ENCODE measurements at regions of chr10 and their contacts with region 1.

Region 1: GRCh38 chr10:3785257-3785850 is 345 bp upstream of the KLF6 start:
- DNase-seq: peak; percentile 99
- H3K4me3 ChIP-seq: peak overlapping the region; percentile 73 to 97 (median 90)
- H3K27ac ChIP-seq: peak overlapping the region; percentile 98 to 100 (median 100)
- H3K4me1 ChIP-seq: peaks cover 0 to 20% (median 18%) of the 10 kb centered on the region in 4 donors
- H3K27me3 ChIP-seq: no peaks in the 10 kb centered on the region
- CTCF ChIP-seq: no peak
- EP300 ChIP-seq: peak in 2 of 4 donors; percentile 24 to 75
- POLR2A ChIP-seq: peak; percentile 72 to 88

Region 2: GRCh38 chr10:3467052-3467951 is 318.1 kb before region 1 on chr10:
- intact Hi-C with region 1: loop called (anchors 5 kb)
- DNase-seq: peak; percentile 88
- H3K4me3 ChIP-seq: peak overlapping the region in 2 of 4 donors; percentile 2 to 8
- H3K27ac ChIP-seq: peak overlapping the region; percentile 83 to 91 (median 90)
- H3K4me1 ChIP-seq: peaks cover 0 to 68% (median 67%) of the 10 kb centered on the region in 4 donors
- H3K27me3 ChIP-seq: no peaks in the 10 kb centered on the region
- CTCF ChIP-seq: no peak
- EP300 ChIP-seq: peak in 2 of 4 donors; percentile 6 to 45
- POLR2A ChIP-seq: no peak

Region 3: GRCh38 chr10:3757638-3758490 is 27.5 kb before region 1 on chr10:
- intact Hi-C with region 1: no loop called
- DNase-seq: no peak
- H3K4me3 ChIP-seq: no peak overlapping the region
- H3K27ac ChIP-seq: no peak overlapping the region
- H3K4me1 ChIP-seq: peaks cover 0 to 8% (median 5%) of the 10 kb centered on the region in 4 donors
- H3K27me3 ChIP-seq: no peaks in the 10 kb centered on the region
- CTCF ChIP-seq: no peak
- EP300 ChIP-seq: no peak
- POLR2A ChIP-seq: no peak

Region 4: DNA sequence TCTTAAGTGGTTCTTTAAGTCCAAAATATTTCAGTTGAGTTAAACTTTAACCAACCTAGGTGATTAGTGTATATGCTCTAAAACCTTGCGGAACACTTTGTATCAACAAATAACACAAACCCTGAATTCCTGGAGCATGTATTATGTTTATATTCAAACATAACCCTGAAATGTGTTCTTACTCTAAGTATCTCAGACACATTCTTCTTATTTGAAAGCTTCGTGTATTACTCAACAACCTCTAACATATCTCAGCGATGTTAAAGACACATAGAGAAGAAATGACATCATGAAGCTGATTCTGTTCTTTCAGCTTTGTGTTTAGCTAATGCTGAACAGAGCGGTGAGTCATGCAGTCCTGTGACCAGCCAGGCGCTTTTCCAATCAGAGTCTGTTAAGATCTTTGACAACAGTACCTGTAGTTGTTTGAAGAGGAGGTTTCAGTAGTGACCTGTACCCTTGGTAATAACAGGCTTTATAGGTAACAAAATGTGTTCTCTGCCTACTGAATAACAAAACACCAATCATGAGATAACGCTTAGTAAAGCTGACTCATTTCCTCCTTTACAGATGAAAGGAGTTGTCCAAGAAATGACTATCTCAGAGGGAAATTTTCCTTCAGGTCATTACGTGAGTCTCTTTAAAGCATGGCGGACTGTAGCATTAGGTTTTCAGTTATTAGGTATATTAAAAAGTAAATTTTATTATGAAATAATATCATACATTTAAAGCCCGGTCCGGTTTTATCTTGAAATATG is 67.0 kb after region 1 on chr10:
- intact Hi-C with region 1: loop called (anchors 2 kb)
- DNase-seq: peak; percentile 93
- H3K4me3 ChIP-seq: no peak overlapping the region
- H3K27ac ChIP-seq: peak overlapping the region; percentile 79 to 90 (median 88)
- H3K4me1 ChIP-seq: peaks cover 0 to 38% (median 25%) of the 10 kb centered on the region in 4 donors
- H3K27me3 ChIP-seq: no peaks in the 10 kb centered on the region
- CTCF ChIP-seq: no peak
- EP300 ChIP-seq: peak; percentile 12 to 90 (median 60)
- POLR2A ChIP-seq: peak in 1 of 2 donors; percentile 13

Region 5: GRCh38 chr10:4061441-4061951 is 276.1 kb after region 1 on chr10:
- intact Hi-C with region 1: loop called (anchors 5 kb)
- DNase-seq: peak; percentile 91
- H3K4me3 ChIP-seq: no peak overlapping the region
- H3K27ac ChIP-seq: peak overlapping the region; percentile 65 to 83 (median 74)
- H3K4me1 ChIP-seq: peaks cover 0 to 47% (median 44%) of the 10 kb centered on the region in 4 donors
- H3K27me3 ChIP-seq: no peaks in the 10 kb centered on the region
- CTCF ChIP-seq: no peak
- EP300 ChIP-seq: no peak
- POLR2A ChIP-seq: no peak

Region 6: DNA sequence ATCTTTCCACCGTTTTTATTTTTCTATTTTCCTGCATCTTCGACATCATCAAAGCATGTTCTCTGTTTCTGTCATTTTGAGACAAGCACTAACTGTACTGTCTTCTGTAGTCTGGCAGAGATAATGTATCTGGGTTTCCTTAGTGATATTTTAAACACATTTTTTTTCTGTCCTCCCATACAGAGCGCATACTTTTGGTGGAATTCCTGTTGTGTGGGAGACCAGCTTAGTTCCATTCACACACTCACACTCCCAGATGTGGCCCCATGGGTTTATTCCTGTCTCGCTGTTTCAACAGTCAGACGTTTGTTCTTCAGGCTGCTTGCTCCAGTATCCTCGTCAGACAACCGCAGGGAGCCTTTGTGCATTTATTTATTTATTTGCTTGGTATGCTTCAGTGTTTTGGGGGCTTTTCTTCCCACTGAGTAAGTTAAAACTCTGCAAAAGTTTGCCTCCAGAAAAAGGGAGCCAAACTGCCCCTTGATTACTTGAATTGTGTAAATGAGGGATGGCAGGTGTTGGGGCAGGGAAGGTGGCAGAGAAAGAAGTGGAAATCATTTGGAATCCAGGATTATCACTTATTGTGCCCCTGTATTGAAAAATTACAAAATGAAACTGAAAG is 456.5 kb after region 1 on chr10:
- intact Hi-C with region 1: loop called (anchors 5 kb)
- DNase-seq: no peak
- H3K4me3 ChIP-seq: peak overlapping the region in 3 of 4 donors; percentile 31 to 47 (median 34)
- H3K27ac ChIP-seq: peak overlapping the region; percentile 82 to 88 (median 87)
- H3K4me1 ChIP-seq: peaks cover 0 to 57% (median 32%) of the 10 kb centered on the region in 4 donors
- H3K27me3 ChIP-seq: no peaks in the 10 kb centered on the region
- CTCF ChIP-seq: no peak
- EP300 ChIP-seq: peak in 3 of 4 donors; percentile 49 to 87 (median 51)
- POLR2A ChIP-seq: no peak

Region 7: GRCh38 chr10:4353964-4354363 is 568.6 kb after region 1 on chr10:
- intact Hi-C with region 1: loop called (anchors 5 kb)
- DNase-seq: no peak
- H3K4me3 ChIP-seq: no peak overlapping the region
- H3K27ac ChIP-seq: peak overlapping the region; percentile 40 to 75 (median 72)
- H3K4me1 ChIP-seq: peaks cover 0 to 34% (median 29%) of the 10 kb centered on the region in 4 donors
- H3K27me3 ChIP-seq: no peaks in the 10 kb centered on the region
- CTCF ChIP-seq: no peak
- EP300 ChIP-seq: no peak
- POLR2A ChIP-seq: no peak

Region 8: DNA sequence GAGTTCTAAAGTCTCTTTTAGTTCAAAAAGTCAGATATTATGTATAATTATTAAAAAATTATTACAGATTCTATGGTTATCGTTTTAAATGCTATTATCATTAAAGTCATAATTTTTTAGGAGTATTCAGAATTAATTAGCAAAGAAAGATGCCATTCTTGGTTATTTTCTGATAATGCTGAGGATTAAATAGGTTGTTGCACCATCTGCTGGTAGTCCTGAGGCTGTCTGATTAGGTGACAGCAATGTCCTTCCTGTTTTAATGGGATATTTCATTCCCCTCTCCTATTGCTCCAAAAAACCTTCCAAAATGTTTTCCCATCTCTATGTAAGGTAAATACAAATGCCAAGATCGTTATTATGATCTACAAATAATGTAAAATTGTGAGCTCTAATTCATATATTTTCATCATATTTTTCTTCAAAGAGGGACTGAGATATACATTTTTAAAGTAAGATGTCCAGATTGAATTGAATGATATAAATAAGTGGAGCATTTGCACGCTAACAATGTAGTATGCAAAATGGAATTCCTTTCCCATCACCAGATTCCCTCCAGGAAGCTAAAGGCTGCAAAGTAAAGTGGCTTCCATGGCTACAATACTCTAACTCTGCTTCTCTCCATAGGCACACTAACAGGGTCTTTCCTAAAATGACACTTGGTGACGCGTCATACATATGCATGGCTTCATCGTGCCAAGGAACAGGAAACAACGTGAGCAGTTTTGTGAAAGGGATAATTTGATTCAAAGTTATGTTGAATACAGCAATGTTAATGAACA is 981.9 kb after region 1 on chr10:
- intact Hi-C with region 1: loop called (anchors 2 kb)
- DNase-seq: no peak
- H3K4me3 ChIP-seq: no peak overlapping the region
- H3K27ac ChIP-seq: peak overlapping the region in 2 of 4 donors; percentile 1 to 58
- H3K4me1 ChIP-seq: peaks cover 0 to 40% (median 28%) of the 10 kb centered on the region in 4 donors
- H3K27me3 ChIP-seq: no peaks in the 10 kb centered on the region
- CTCF ChIP-seq: peak; percentile 47 to 79 (median 64)
- EP300 ChIP-seq: no peak
- POLR2A ChIP-seq: no peak

Region 9: DNA sequence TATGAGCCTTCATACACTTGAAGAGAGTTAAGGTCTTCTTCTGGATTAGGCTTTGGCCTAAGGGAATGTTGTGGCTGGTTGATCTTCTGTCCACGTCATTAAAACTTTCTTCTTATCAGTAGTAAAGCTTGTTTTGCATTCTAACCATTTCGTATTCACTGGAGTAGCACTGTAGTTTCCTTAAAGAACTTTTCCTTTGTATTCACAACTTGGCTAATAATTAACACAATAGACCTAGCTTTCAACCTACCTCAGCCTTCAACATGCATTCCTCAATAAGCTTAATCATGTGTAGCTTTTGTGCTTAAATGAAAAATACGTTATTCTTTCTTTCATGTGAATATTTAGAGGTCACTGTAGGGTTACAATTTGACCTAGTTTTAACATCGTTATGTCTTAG is 1356.8 kb after region 1 on chr10:
- intact Hi-C with region 1: no loop called
- DNase-seq: no peak
- H3K4me3 ChIP-seq: no peak overlapping the region
- H3K27ac ChIP-seq: no peak overlapping the region
- H3K4me1 ChIP-seq: no peaks in the 10 kb centered on the region
- H3K27me3 ChIP-seq: no peaks in the 10 kb centered on the region
- CTCF ChIP-seq: no peak
- EP300 ChIP-seq: no peak
- POLR2A ChIP-seq: no peak